PC-9 (cell line): ENCODE measurements at regions of chr1 and their contacts with region 1.

Region 1: DNA sequence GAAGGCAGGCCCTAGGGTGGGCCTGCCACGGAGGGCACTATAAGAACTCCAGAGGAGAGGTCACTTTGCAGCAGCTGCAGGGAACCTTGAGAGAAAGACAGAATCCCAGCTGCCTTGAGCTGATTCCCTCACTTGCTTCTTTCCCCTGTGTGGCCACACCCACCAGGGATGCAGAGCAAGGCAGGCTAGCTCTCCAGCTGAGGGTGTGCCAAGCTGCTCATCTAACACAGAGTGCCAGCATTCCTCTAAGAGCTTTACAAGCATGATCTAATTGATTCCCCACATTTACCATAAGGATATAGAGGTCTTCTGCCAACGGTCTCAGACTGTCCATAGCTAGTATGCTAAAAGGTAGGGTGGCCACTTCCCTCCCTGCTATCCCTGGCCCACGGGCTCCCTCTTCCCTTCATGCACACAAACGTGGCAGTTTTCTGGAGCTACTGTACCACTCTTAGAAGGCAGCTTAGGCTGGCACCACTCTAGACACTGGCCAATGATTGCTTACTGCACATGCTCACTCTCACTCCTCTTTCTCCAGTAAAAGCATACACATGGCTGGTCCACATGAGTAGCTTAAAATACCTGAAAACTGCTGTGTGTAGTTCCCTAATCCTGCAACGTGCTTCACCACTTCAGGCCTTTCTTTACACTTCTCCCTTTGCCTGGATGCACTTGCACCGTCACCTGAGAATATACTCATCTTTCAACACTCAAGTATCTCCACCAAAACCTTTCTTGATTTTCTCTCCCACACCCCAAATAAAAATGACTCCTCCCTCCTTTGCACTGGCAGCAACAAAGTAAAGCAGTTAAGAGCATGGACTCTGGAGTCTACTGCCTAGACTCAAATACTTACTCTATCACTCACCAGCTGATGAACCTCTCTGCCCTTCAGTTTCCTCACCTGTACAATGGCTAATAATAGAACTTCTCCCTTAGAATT is 57.7 kb downstream of the DMAP1 start:
- DNase-seq: no peak
- H3K4me3 ChIP-seq: no peak overlapping the region
- H3K27ac ChIP-seq: no peak overlapping the region
- H3K4me1 ChIP-seq: no peaks in the 10 kb centered on the region
- H3K27me3 ChIP-seq: no peaks in the 10 kb centered on the region
- CTCF ChIP-seq: no peak

Region 2: GRCh38 chr1:45395051-45395450 is 1124.1 kb after region 1 on chr1:
- CTCF ChIA-PET with region 1: no interaction called
- POLR2A ChIA-PET with region 1: no interaction called
- intact Hi-C with region 1: loop called (anchors 5 kb)
- DNase-seq: no peak
- H3K4me3 ChIP-seq: no peak overlapping the region
- H3K27ac ChIP-seq: no peak overlapping the region
- H3K4me1 ChIP-seq: no peaks in the 10 kb centered on the region
- H3K27me3 ChIP-seq: no peaks in the 10 kb centered on the region
- CTCF ChIP-seq: no peak